Dendritic cell treated with granulocyte-macrophage colony-stimulating factor and Interleukin-4, amounts not matched to agents 40 ng/mL and 50 ng/mL, for 4 days (primary cell): ENCODE measurements at regions of chr16 and their contacts with region 1.

Region 1: DNA sequence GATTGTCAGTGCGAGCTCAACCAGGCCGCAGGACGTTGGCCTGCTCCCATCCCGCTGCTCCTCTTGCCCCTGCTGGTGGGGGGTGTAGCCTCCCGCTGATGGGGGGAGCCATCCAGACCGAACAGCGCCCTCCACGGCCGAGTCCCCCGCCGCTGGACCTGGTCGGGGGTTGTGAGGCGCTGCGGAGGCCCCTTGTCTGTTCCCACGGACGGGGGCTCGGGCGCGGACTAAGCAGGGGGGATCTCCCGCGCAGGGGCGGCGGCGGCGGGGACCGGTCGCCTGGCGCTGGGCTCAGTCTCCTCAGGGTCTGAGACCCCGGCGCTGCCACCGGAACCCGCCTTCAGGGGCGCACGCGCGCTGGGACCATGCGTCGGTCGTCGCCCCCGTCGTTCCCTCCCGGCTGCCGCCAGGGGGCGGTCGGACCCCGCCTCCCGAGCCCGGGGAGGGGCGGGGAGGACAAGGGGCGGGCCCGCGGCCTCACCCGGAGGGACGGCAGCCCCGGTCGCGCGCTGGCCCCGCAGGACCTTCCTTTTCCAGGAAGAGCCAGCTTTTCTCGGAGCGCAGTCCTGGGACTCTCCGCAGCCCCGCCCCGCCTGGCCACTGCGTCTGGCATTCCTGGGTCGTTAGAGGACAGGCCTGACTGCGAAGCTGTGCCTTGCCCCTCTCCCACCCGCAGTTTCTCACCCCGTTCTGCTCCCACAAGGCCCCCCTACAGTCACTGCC is 6.3 kb upstream of the IL32 start:
- H3K4me3 Mint-ChIP-seq: peak overlapping the region; percentile 81
- H3K27ac Mint-ChIP-seq: peak overlapping the region; percentile 95
- H3K4me1 Mint-ChIP-seq: peaks cover 64% of the 10 kb centered on the region
- H3K27me3 Mint-ChIP-seq: peaks cover 2% of the 10 kb centered on the region

Region 2: GRCh38 chr16:3094289-3095027 is 35.3 kb after region 1 on chr16:
- intact Hi-C with region 1: loop called (anchors 1 kb)
- H3K4me3 Mint-ChIP-seq: no peak overlapping the region
- H3K27ac Mint-ChIP-seq: no peak overlapping the region
- H3K4me1 Mint-ChIP-seq: peaks cover 26% of the 10 kb centered on the region
- H3K27me3 Mint-ChIP-seq: peaks cover 29% of the 10 kb centered on the region

Region 3: DNA sequence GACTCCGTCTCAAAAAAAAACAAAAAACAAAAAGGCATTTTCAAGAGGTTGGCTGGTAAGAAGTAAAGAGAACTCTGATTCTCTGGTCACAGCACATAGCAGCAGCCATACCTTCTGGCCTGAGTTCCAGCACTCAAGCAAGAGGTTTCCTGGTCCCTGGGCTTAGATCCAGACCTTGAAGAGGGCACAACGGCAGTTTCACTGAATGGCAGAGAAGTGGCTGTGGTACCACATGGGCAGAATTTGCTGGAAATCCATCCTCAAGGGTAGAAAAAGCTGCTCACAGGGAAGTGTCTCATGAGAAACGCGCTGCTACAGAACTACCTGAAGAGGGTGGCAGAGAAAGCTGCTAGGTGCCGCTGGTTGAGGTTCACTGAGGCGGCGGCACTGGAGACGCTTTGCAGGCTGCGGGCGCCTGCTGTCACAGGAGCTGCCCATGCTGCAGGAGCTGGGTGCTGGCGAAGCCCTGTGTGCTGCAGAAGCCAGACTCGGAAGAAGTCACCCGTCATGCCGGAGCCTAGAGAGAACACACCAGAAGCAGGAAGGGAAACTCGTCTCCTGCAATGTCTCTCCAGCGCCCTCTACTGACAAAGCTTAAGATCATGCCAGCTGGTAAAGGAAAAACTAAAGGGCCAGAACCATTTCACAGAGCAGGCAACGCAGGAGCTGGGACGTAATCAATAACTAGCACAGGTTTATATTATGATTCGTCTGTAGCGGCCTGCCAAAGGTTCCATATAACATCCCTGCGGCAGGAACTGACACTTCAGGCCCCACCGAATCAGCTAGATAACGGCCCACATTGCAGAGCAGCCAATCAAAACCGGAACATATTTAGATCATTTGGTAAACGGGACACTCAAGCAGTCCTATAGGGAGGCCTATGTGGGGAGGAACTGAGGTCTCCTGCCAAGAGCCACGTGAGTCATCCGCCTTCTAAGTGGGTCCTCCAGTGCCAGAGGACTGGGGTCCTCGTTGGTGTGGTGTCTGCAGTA is 70.3 kb after region 1 on chr16:
- intact Hi-C with region 1: loop called (anchors 1 kb)
- H3K4me3 Mint-ChIP-seq: peak overlapping the region; percentile 86
- H3K27ac Mint-ChIP-seq: peak overlapping the region; percentile 87
- H3K4me1 Mint-ChIP-seq: peaks cover 47% of the 10 kb centered on the region
- H3K27me3 Mint-ChIP-seq: no peaks in the 10 kb centered on the region

Region 4: GRCh38 chr16:3166510-3166895 is 107.3 kb after region 1 on chr16:
- intact Hi-C with region 1: loop called (anchors 1 kb)
- H3K4me3 Mint-ChIP-seq: no peak overlapping the region
- H3K27ac Mint-ChIP-seq: no peak overlapping the region
- H3K4me1 Mint-ChIP-seq: peaks cover 33% of the 10 kb centered on the region
- H3K27me3 Mint-ChIP-seq: peaks cover 91% of the 10 kb centered on the region

Region 5: DNA sequence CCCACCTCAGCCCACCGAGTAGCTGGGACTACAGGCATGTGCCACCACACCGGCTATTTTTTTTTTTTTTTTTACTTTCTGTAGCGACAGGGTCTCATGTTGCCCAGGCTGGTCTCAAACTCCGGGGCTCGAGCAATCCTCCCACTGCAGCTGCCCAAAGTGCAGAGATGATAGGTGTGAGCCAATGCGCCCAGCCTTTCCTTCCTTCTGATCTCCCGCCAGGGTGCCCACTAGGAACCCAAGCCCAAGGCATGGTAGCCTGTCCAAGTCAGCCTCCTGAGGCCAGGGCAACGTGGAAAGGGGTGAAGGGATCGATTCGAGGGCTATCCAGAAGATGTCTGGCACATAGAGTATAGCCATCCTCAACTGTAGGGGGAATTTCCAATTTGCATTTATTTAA is 830.9 kb after region 1 on chr16:
- intact Hi-C with region 1: no loop called
- H3K4me3 Mint-ChIP-seq: no peak overlapping the region
- H3K27ac Mint-ChIP-seq: no peak overlapping the region
- H3K4me1 Mint-ChIP-seq: peaks cover 10% of the 10 kb centered on the region
- H3K27me3 Mint-ChIP-seq: peaks cover 24% of the 10 kb centered on the region